K562 (cell line): ENCODE measurements at regions of chr5 and their contacts with region 1.

Region 1: DNA sequence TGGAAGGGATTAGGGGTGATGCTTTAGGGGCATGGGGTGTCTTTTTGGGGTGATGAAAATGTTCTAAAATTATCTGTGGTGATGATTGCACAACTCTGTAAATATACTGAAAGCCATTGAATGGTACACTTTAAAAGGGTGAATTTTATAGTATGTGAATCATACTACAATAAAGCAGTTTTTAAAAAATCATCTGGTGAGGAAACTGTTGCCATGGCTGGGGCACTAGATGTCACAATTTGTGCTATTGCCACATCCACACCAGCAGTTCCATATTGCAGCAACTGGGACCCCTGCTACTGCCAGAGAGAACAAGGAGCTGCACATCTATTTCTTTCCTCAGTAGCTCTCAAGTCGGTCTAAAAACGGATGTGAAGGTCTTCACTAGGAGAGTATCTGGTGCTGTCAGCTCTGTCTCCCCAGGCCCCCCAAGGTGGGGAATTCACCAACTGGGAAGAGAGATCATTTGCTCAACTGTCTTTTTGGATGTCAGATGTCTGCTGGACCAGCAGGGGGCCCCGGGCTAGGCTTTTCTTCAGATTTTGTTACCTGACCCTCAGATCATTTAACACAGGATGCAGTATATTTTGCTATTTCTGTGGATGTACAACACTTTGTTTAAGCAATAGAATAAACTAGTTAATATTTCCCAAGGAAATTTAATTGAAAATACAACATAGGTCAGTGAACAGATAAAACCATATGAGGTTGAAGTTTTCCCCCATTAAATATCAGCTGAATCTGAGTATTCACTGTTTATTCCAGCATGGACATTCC is 13.2 kb downstream of the CMYA5 start:
- DNase-seq: peak; percentile 38 to 46 (median 43)
- ATAC-seq: peak; percentile 67; the same call in 2 of the 3 replicates
- H3K4me3 ChIP-seq: no peak overlapping the region
- H3K27ac ChIP-seq: no peak overlapping the region
- H3K4me1 ChIP-seq: no peaks in the 10 kb centered on the region
- H3K27me3 ChIP-seq: no peaks in the 10 kb centered on the region
- CTCF ChIP-seq: peak; percentile 58 to 73 (median 68)
- EP300 ChIP-seq: no peak
- POLR2A ChIP-seq: no peak
- RAD21 ChIP-seq: peak; percentile 30 to 60; a peak in 3 of 4 replicates

Region 2: DNA sequence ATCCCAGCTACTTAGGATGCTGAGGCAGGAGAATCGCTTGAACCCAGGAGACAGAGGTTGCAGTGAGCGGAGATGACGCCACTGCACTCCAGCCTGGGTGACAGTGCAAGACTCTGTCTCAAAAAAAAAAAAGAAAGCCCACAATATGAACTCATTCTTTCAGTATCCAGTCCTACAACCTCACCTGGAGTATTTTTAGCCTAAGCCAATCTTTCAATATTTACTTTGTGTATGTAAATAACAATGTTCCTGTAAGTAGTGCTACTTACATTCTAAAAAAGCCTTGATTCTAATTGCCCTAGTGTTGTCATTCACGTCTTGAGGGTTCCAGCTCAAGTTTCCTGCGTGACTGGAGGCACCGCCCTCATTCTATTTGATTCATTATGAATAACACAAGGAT is 529.2 kb before region 1 on chr5:
- CTCF ChIA-PET with region 1: no interaction called
- POLR2A ChIA-PET with region 1: no interaction called
- in situ Hi-C with region 1: no loop called
- intact Hi-C with region 1: no loop called
- DNase-seq: no peak
- ATAC-seq: no peak
- H3K4me3 ChIP-seq: no peak overlapping the region
- H3K27ac ChIP-seq: no peak overlapping the region
- H3K4me1 ChIP-seq: no peaks in the 10 kb centered on the region
- H3K27me3 ChIP-seq: no peaks in the 10 kb centered on the region
- CTCF ChIP-seq: no peak
- EP300 ChIP-seq: no peak
- POLR2A ChIP-seq: no peak
- RAD21 ChIP-seq: no peak

Region 3: DNA sequence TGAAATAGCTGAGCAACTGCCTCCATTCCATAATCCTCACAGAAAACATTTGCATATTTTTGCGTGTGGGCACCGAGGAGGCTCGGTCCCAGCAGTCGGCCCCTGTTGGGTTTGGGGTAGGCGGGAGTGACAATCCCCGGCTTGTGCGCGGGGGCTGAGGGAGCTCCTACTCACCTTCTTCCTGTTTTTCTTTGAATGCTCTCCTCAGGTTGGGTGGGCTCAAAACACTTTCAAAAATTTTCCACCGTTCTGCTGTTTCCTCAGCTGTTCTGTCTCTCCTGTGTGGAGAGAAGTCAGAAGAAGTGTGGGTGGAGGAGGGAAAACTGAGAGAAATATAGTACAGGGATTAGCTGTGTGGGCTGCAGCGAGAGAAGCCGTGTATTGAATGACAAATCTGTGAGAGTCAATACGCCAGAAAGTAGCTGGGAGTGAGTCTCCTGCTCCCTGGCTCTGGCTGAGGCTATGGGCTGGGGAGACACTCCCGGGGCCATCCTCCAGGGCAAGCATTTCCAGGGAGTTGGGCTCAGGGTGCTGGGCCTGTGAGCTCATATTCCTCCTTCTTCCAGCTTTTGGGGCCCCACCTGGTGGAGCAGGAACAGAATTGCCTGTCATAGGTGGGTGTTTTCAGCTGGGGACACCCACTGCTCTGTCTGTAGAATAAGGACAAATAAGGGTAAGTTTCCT is 71.5 kb after region 1 on chr5:
- CTCF ChIA-PET with region 1: no interaction called
- POLR2A ChIA-PET with region 1: no interaction called
- in situ Hi-C with region 1: no loop called
- intact Hi-C with region 1: loop called (anchors 5 kb)
- DNase-seq: peak; percentile 27 to 69 (median 50)
- ATAC-seq: peak; percentile 98
- H3K4me3 ChIP-seq: no peak overlapping the region
- H3K27ac ChIP-seq: no peak overlapping the region
- H3K4me1 ChIP-seq: peaks cover 0 to 2% of the 10 kb centered on the region in 2 experiments; a peak in 1 of 5 replicates
- H3K27me3 ChIP-seq: no peaks in the 10 kb centered on the region
- CTCF ChIP-seq: peak; percentile 63 to 70 (median 64)
- EP300 ChIP-seq: no peak
- POLR2A ChIP-seq: no peak
- RAD21 ChIP-seq: peak; percentile 39 to 68; a peak in 3 of 4 replicates

Region 4: GRCh38 chr5:79857714-79858409 is 155.1 kb after region 1 on chr5:
- CTCF ChIA-PET with region 1: interaction called, 5 read pairs
- POLR2A ChIA-PET with region 1: no interaction called
- in situ Hi-C with region 1: no loop called
- intact Hi-C with region 1: loop called (anchors 2 kb)
- DNase-seq: peak; percentile 47 to 82 (median 67)
- ATAC-seq: peak; percentile 80
- H3K4me3 ChIP-seq: no peak overlapping the region
- H3K27ac ChIP-seq: no peak overlapping the region
- H3K4me1 ChIP-seq: peaks cover 0 to 3% of the 10 kb centered on the region in 2 experiments; a peak in 1 of 5 replicates
- H3K27me3 ChIP-seq: peaks cover 9 to 30% of the 10 kb centered on the region in 2 experiments; a peak in 4 of 5 replicates
- CTCF ChIP-seq: peak; percentile 84 to 91 (median 90)
- EP300 ChIP-seq: no peak
- POLR2A ChIP-seq: no peak
- RAD21 ChIP-seq: peak; percentile 80 to 92

Region 5: DNA sequence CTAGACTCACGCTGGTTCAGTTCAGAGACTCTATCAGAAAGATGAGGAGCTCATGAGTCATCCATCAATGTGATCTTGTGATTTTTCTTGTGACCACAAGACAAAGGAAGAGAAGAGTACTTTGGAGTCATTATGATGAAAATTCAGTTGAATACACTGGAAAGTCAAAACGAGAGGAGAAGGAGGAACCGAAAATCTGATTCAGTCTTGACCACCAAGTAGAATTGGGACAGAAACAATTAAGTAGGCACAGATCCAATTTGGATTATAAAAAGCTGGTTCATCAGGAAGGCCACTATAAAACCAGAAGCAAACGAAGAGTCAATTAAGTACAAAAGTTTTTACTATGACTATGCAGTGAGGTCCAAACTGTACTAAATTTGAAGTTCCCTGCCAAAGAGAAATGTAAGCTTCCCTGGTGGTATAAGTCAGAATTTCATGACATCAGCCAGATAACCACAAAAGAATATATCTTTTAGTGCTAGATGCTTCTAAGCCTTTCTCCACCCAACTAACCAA is 423.2 kb after region 1 on chr5:
- CTCF ChIA-PET with region 1: no interaction called
- POLR2A ChIA-PET with region 1: no interaction called
- in situ Hi-C with region 1: no loop called
- intact Hi-C with region 1: no loop called
- DNase-seq: no peak
- ATAC-seq: no peak
- H3K4me3 ChIP-seq: no peak overlapping the region
- H3K27ac ChIP-seq: no peak overlapping the region
- H3K4me1 ChIP-seq: no peaks in the 10 kb centered on the region
- H3K27me3 ChIP-seq: peaks cover 3 to 16% of the 10 kb centered on the region in 2 experiments
- CTCF ChIP-seq: no peak
- EP300 ChIP-seq: no peak
- POLR2A ChIP-seq: no peak
- RAD21 ChIP-seq: no peak